SK-N-SH (cell line): ENCODE measurements at regions of chr3 and their contacts with region 1.

Region 1: GRCh38 chr3:165195640-165196576 is at the start of gene SLITRK3:
- DNase-seq: peak; percentile 38
- H3K4me3 ChIP-seq: peak within 1 kb of the TSS; percentile 39 to 47; a peak in 3 of 4 replicates
- H3K27ac ChIP-seq: no peak within 1 kb of the TSS
- H3K4me1 ChIP-seq: peaks cover 5 to 23% of the 10 kb centered on the region in 2 experiments; a peak in 2 of 4 replicates
- H3K27me3 ChIP-seq: peaks cover 50% of the 10 kb centered on the region
- CTCF ChIP-seq: no peak
- EP300 ChIP-seq: no peak
- RAD21 ChIP-seq: no peak
- polyA plus RNA-seq, gene SLITRK3: not detected in 2 replicates

Region 2: GRCh38 chr3:165185707-165186327 is 10.1 kb before region 1 on chr3:
- CTCF ChIA-PET with region 1: interaction called, 12 read pairs
- POLR2A ChIA-PET with region 1: no interaction called
- DNase-seq: peak; percentile 64
- H3K4me3 ChIP-seq: peak overlapping the region in 1 of 2 experiments; percentile 21; a peak in 1 of 4 replicates
- H3K27ac ChIP-seq: no peak overlapping the region
- H3K4me1 ChIP-seq: no peaks in the 10 kb centered on the region
- H3K27me3 ChIP-seq: no peaks in the 10 kb centered on the region
- CTCF ChIP-seq: peak; percentile 90
- EP300 ChIP-seq: no peak
- RAD21 ChIP-seq: peak; percentile 96

Region 3: GRCh38 chr3:165206454-165207266 is 10.8 kb after region 1 on chr3:
- CTCF ChIA-PET with region 1: interaction called, 26 read pairs
- POLR2A ChIA-PET with region 1: no interaction called
- DNase-seq: peak; percentile 68
- H3K4me3 ChIP-seq: peak overlapping the region; percentile 41 to 58
- H3K27ac ChIP-seq: no peak overlapping the region
- H3K4me1 ChIP-seq: peaks cover 0 to 4% of the 10 kb centered on the region in 2 experiments; a peak in 2 of 4 replicates
- H3K27me3 ChIP-seq: no peaks in the 10 kb centered on the region
- CTCF ChIP-seq: peak; percentile 94
- EP300 ChIP-seq: no peak
- RAD21 ChIP-seq: peak; percentile 68